Activated B cell treated with CpG ODN at 0.5 μM for 24 hours (primary cell): ENCODE measurements at regions of chr5 and their contacts with region 1.

Region 1: DNA sequence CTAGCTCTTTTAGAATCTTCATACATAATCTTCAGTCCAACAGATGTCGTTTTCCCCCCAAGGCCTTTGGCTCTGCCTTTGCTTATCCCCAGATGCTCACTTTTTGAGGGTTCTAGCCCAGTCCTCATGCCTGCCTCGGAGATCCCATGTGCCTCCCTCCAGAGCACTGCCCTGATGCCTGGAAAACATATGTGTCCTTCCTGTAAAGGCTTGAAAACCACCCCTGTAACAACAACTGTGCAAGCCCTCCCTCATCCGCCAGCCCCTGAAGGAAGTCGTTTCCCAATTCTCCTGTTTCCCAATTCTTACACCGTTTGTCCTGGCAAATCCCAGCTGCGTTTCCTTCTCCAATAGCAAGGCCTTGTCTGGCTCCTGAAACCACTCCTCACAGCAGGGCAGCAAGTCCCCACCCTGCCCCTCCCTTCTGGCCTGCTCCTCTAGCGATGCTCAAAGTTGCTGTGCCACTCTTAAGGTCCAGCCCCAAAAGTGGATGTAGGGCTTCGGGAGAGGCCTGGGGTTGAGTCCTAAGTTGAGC is 52.2 kb downstream of the SLC36A1 start:
- DNase-seq: no peak
- ATAC-seq: no peak
- H3K4me3 Mint-ChIP-seq: no peak overlapping the region
- H3K27ac Mint-ChIP-seq: no peak overlapping the region
- H3K4me1 Mint-ChIP-seq: peaks cover 5% of the 10 kb centered on the region
- H3K27me3 Mint-ChIP-seq: no peaks in the 10 kb centered on the region
- CTCF ChIP-seq: no peak

Region 2: DNA sequence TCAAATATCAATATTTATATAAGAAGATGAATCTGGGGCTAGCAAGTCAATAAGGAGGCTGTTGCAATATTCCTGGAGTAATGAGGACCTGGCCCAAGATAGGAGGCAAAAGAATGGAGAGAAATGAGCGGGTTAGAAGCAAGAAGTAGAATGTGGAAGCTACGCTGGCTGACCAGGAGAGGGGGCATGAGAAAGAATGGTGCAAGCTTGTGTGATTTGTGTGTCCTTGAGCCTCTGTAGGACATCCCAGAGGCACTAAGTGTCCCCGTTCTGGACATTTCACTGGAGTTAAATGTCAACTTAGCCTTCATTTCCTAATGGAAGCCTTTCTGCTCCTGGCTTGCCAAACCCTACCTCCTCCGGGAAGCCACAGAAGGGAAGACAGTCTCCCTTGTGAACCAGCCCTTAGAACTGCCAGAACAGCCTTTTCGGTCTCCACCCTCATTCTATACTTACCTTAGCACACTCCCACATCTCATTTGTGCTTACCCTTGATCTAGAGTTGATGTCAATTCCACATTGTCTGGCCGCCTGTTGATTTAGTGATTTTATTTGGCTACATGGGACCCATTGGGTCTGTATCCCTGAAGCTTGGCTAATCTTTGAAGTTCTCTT is 1548.3 kb before region 1 on chr5:
- CTCF ChIA-PET with region 1: no interaction called
- POLR2A ChIA-PET with region 1: no interaction called
- intact Hi-C with region 1: no loop called
- DNase-seq: no peak
- ATAC-seq: no peak
- H3K4me3 Mint-ChIP-seq: no peak overlapping the region
- H3K27ac Mint-ChIP-seq: no peak overlapping the region
- H3K4me1 Mint-ChIP-seq: no peaks in the 10 kb centered on the region
- H3K27me3 Mint-ChIP-seq: peaks cover 7% of the 10 kb centered on the region
- CTCF ChIP-seq: no peak

Region 3: GRCh38 chr5:151315998-151316597 is 183.5 kb before region 1 on chr5:
- CTCF ChIA-PET with region 1: interaction called, 3 read pairs
- POLR2A ChIA-PET with region 1: no interaction called
- intact Hi-C with region 1: loop called (anchors 5 kb)
- DNase-seq: peak; percentile 40
- ATAC-seq: peak; percentile 83
- H3K4me3 Mint-ChIP-seq: no peak overlapping the region
- H3K27ac Mint-ChIP-seq: no peak overlapping the region
- H3K4me1 Mint-ChIP-seq: peaks cover 11% of the 10 kb centered on the region
- H3K27me3 Mint-ChIP-seq: peaks cover 5% of the 10 kb centered on the region
- CTCF ChIP-seq: peak; percentile 64

Region 4: DNA sequence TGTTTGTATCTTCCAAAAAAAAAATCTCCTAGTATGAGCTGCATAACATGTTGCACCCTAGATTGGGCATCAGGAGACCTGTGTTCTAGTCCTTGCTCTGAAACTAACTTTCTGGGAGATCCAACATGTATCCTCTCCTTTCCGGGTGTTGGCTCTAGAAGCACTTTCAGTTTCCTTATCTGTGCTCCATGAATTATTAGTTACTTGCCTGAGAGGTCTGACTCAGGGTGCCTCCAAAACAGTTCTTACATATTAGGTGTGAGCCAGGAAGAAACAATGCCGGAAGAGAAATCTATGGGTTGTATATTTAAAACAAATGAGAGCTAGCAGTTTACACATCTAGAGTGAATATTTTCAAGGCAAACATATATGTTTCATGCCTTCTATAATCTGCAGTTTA is 115.5 kb before region 1 on chr5:
- CTCF ChIA-PET with region 1: no interaction called
- POLR2A ChIA-PET with region 1: no interaction called
- intact Hi-C with region 1: loop called (anchors 1 kb)
- DNase-seq: no peak
- ATAC-seq: no peak
- H3K4me3 Mint-ChIP-seq: no peak overlapping the region
- H3K27ac Mint-ChIP-seq: no peak overlapping the region
- H3K4me1 Mint-ChIP-seq: no peaks in the 10 kb centered on the region
- H3K27me3 Mint-ChIP-seq: peaks cover 23% of the 10 kb centered on the region
- CTCF ChIP-seq: no peak

Region 5: DNA sequence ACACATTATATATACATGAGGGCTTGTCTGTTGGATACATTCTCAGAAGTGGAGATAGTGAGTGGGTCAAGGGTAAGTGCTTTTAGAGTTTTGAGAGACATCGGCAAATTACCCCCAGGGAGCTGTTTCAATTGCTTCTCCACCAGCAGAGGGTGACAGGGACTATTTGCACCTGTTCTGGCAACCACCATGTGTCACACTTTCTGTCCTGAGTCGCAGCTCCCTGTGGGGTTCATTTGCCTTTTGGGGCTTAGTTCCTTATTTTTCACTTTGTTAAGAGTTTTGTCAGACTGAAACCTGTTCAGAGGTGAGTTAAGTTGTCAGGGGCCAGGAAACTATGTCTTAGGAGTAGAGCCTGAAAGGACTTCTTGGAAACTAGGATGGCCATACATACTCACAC is 72.3 kb before region 1 on chr5:
- CTCF ChIA-PET with region 1: no interaction called
- POLR2A ChIA-PET with region 1: no interaction called
- intact Hi-C with region 1: loop called (anchors 1 kb)
- DNase-seq: peak; percentile 22
- ATAC-seq: peak; percentile 97
- H3K4me3 Mint-ChIP-seq: no peak overlapping the region
- H3K27ac Mint-ChIP-seq: peak overlapping the region; percentile 62
- H3K4me1 Mint-ChIP-seq: peaks cover 22% of the 10 kb centered on the region
- H3K27me3 Mint-ChIP-seq: peaks cover 14% of the 10 kb centered on the region
- CTCF ChIP-seq: no peak

Region 6: GRCh38 chr5:151523335-151523734 is 23.8 kb after region 1 on chr5:
- CTCF ChIA-PET with region 1: no interaction called
- POLR2A ChIA-PET with region 1: no interaction called
- intact Hi-C with region 1: no loop called
- DNase-seq: no peak
- ATAC-seq: peak; percentile 79
- H3K4me3 Mint-ChIP-seq: no peak overlapping the region
- H3K27ac Mint-ChIP-seq: no peak overlapping the region
- H3K4me1 Mint-ChIP-seq: no peaks in the 10 kb centered on the region
- H3K27me3 Mint-ChIP-seq: peaks cover 2% of the 10 kb centered on the region
- CTCF ChIP-seq: no peak